CD4-positive, alpha-beta T cell (primary cell): ENCODE measurements at regions of chr18 and their contacts with region 1.

Region 1: GRCh38 chr18:13435596-13436327 is 217.2 kb downstream of the LDLRAD4 start:
- DNase-seq: peak in 2 of 14 experiments; percentile 36 to 55
- ATAC-seq: peak; percentile 15
- H3K4me3 ChIP-seq: no peak overlapping the region
- H3K4me3 Mint-ChIP-seq: peak overlapping the region; percentile 46
- H3K27ac ChIP-seq: peak overlapping the region in 1 of 2 donors; percentile 58
- H3K27ac Mint-ChIP-seq: peak overlapping the region; percentile 88
- H3K4me1 ChIP-seq: peaks cover 47% of the 10 kb centered on the region
- H3K4me1 Mint-ChIP-seq: peaks cover 61% of the 10 kb centered on the region
- H3K27me3 ChIP-seq: no peaks in the 10 kb centered on the region
- H3K27me3 Mint-ChIP-seq: no peaks in the 10 kb centered on the region
- CTCF ChIP-seq: no peak

Region 2: GRCh38 chr18:13137670-13138419 is 297.9 kb before region 1 on chr18:
- CTCF ChIA-PET with region 1: no interaction called
- POLR2A ChIA-PET with region 1: no interaction called
- intact Hi-C with region 1: loop called in 1 of 2 experiments (anchors 10 kb)
- DNase-seq: peak; percentile 37 to 93 (median 58)
- ATAC-seq: peak; percentile 76
- H3K4me3 ChIP-seq: peak overlapping the region; percentile 72
- H3K4me3 Mint-ChIP-seq: peak overlapping the region; percentile 98
- H3K27ac ChIP-seq: peak overlapping the region; percentile 48 to 50
- H3K27ac Mint-ChIP-seq: peak overlapping the region; percentile 92
- H3K4me1 ChIP-seq: peaks cover 27% of the 10 kb centered on the region
- H3K4me1 Mint-ChIP-seq: peaks cover 32% of the 10 kb centered on the region
- H3K27me3 ChIP-seq: no peaks in the 10 kb centered on the region
- H3K27me3 Mint-ChIP-seq: no peaks in the 10 kb centered on the region
- CTCF ChIP-seq: no peak

Region 3: GRCh38 chr18:13268158-13269012 is 167.4 kb before region 1 on chr18:
- CTCF ChIA-PET with region 1: no interaction called
- POLR2A ChIA-PET with region 1: no interaction called
- intact Hi-C with region 1: loop called in 1 of 2 experiments (anchors 5 kb)
- DNase-seq: no peak
- ATAC-seq: no peak
- H3K4me3 ChIP-seq: no peak overlapping the region
- H3K4me3 Mint-ChIP-seq: peak overlapping the region; percentile 67
- H3K27ac ChIP-seq: no peak overlapping the region
- H3K27ac Mint-ChIP-seq: peak overlapping the region; percentile 82
- H3K4me1 ChIP-seq: peaks cover 57% of the 10 kb centered on the region
- H3K4me1 Mint-ChIP-seq: peaks cover 73% of the 10 kb centered on the region
- H3K27me3 ChIP-seq: no peaks in the 10 kb centered on the region
- H3K27me3 Mint-ChIP-seq: no peaks in the 10 kb centered on the region
- CTCF ChIP-seq: no peak

Region 4: DNA sequence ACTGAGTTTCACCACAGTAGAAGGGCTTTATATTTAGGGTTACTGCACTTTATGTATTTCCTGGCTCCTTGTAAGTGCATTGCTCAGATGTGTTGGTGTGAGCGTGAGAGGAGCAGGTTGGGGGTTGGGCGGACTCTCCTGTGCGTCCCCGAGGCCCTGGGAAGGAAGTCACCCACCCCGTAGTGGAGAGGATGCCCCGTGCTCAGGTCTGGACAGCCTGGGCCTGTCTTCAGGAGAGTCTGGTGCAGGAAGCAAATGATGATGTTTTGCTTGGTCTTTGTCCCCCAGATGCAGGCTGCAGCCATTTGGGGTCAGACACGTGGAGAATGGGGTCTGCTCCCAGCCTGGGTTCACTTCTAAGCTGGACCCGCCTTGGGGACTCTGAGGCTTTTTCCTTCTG is 34.4 kb before region 1 on chr18:
- CTCF ChIA-PET with region 1: no interaction called
- POLR2A ChIA-PET with region 1: no interaction called
- intact Hi-C with region 1: no loop called
- DNase-seq: no peak
- ATAC-seq: no peak
- H3K4me3 ChIP-seq: no peak overlapping the region
- H3K4me3 Mint-ChIP-seq: no peak overlapping the region
- H3K27ac ChIP-seq: no peak overlapping the region
- H3K27ac Mint-ChIP-seq: no peak overlapping the region
- H3K4me1 ChIP-seq: peaks cover 16% of the 10 kb centered on the region
- H3K4me1 Mint-ChIP-seq: peaks cover 23% of the 10 kb centered on the region
- H3K27me3 ChIP-seq: no peaks in the 10 kb centered on the region
- H3K27me3 Mint-ChIP-seq: no peaks in the 10 kb centered on the region
- CTCF ChIP-seq: no peak

Region 5: GRCh38 chr18:13464432-13465123 is 28.8 kb after region 1 on chr18:
- CTCF ChIA-PET with region 1: interaction called, 3 read pairs
- POLR2A ChIA-PET with region 1: interaction called, 18 read pairs
- intact Hi-C with region 1: no loop called
- DNase-seq: peak; percentile 36 to 86 (median 68)
- ATAC-seq: peak; percentile 95
- H3K4me3 ChIP-seq: peak overlapping the region; percentile 63
- H3K4me3 Mint-ChIP-seq: peak overlapping the region; percentile 91
- H3K27ac ChIP-seq: peak overlapping the region; percentile 60 to 64
- H3K27ac Mint-ChIP-seq: peak overlapping the region; percentile 97
- H3K4me1 ChIP-seq: peaks cover 50% of the 10 kb centered on the region
- H3K4me1 Mint-ChIP-seq: peaks cover 86% of the 10 kb centered on the region
- H3K27me3 ChIP-seq: no peaks in the 10 kb centered on the region
- H3K27me3 Mint-ChIP-seq: no peaks in the 10 kb centered on the region
- CTCF ChIP-seq: peak; percentile 19

Region 6: DNA sequence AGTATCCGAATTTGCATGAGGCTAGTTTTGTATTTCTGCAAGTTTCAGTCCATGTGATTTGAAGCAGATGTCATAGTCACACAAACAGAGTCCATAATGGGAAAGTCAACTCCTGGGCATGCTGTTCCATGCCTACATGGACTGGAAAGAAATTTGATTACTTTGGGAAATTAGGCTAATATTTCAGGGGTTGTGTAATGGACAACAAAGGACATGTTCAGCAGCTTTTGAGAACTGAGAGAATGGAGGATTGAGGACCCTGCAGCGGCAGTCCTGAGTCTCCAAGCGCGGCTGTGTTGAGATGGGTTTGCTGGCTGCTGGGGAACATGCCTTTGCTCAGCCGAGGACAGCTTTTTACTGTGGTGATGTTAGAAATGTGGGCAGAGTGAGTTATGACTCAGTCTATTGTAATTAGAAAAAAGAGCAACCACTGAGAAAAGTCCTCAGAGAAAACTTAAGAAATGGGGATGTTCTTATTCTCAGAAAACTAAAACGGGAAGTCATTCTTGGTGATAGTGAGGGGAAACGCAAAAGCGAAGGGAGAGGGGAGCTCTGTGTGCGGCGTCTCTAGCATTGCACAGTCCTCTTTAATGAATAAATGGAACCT is 141.4 kb after region 1 on chr18:
- CTCF ChIA-PET with region 1: no interaction called
- POLR2A ChIA-PET with region 1: no interaction called
- intact Hi-C with region 1: no loop called
- DNase-seq: peak in 4 of 14 experiments; percentile 19 to 54 (median 46)
- ATAC-seq: peak; percentile 58
- H3K4me3 ChIP-seq: peak overlapping the region; percentile 1
- H3K4me3 Mint-ChIP-seq: peak overlapping the region; percentile 79
- H3K27ac ChIP-seq: no peak overlapping the region
- H3K27ac Mint-ChIP-seq: peak overlapping the region; percentile 48
- H3K4me1 ChIP-seq: peaks cover 37% of the 10 kb centered on the region
- H3K4me1 Mint-ChIP-seq: peaks cover 48% of the 10 kb centered on the region
- H3K27me3 ChIP-seq: no peaks in the 10 kb centered on the region
- H3K27me3 Mint-ChIP-seq: no peaks in the 10 kb centered on the region
- CTCF ChIP-seq: no peak